BJ (cell line): ENCODE measurements at regions of chr12 and their contacts with region 1.

Region 1: DNA sequence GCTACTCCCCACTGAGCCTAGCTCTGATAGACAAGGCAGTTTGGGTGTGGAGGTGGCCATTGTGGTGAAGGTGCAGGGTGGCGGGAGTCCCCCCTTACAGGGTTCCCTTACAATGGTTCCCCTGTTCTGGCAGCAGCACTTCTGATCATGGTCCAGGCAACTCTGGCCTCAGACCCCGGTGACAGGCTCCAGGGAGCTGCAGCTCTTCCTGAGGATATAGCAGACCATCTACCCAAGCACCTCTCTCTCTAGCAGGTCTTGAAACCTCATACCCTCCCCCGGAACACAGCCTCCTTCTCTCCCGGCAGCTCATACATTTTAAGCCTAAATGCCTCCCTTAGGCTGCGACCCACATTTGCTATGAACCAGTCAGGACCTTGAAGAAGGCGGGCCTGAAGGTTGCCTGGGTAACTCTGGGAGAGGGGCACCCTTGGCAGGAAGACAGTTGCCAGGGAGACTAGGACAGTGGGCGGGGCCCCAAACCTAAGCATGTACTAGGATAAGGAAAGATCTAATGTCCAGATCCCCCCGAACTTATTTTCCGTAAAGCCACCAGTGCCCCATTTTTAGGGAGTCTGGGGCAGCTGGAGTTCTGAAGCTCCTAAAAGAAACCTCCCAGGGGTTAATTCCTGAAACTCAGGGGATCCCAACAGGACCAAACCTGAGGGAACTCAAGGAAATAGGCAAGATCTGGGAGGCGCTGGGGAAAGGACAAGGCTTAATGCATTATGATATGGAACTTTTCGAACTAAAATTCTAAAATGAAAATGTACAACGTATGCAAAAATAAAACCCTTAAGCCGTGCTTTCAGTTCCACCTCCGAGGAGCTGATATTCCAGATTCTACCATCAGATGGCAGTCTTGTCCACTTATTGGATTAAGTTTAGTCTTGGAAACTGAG is 4.5 kb upstream of the GDF11 start:
- DNase-seq: no peak
- H3K4me3 ChIP-seq: peak overlapping the region; percentile 58
- H3K27me3 ChIP-seq: no peaks in the 10 kb centered on the region
- CTCF ChIP-seq: peak; percentile 67

Region 2: DNA sequence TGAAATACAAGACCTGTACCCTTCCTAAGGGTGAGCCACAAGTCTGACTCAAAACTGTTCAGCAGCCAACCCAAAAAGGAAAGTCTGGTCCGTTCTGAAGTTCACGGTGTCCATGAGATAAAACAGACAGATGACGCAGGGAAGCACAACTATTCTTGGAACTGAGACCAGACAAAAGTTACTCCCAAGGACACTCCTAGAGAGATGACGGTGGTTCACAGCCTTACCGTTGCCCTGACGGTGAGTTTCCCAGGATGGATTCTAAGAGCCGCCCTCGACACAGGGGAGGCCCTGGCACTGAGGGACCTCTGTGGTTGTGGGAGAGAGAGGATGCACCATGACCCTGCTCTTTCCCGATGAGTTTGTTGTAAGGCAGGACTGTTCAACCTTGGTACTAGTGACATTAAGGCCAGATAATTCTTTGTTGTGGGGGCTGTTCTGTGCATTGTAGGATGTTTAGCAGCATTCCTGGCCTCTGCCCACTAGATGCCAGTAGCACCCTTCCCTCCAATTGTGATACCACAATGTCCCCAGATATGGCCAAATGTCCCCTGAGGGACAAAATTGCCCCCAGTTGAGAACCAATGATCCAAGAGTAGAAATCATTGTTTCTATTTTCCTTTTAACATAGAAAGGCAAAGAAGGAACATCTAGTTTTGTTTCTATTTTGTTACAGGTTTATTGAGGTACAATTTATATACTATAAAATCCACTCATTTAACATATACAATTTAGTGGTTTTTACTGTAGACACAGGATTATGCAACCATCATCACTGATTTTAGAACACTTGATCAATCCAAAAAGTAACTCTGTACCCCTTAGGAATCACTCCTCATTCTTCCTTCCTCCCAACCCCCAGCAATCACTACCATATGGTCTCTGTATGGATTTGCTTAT is 78.6 kb before region 1 on chr12:
- CTCF ChIA-PET with region 1: interaction called, 41 read pairs
- POLR2A ChIA-PET with region 1: no interaction called
- DNase-seq: no peak
- H3K4me3 ChIP-seq: no peak overlapping the region
- H3K27me3 ChIP-seq: peaks cover 9% of the 10 kb centered on the region
- CTCF ChIP-seq: peak; percentile 46; the same call in 1 of the 2 replicates

Region 3: DNA sequence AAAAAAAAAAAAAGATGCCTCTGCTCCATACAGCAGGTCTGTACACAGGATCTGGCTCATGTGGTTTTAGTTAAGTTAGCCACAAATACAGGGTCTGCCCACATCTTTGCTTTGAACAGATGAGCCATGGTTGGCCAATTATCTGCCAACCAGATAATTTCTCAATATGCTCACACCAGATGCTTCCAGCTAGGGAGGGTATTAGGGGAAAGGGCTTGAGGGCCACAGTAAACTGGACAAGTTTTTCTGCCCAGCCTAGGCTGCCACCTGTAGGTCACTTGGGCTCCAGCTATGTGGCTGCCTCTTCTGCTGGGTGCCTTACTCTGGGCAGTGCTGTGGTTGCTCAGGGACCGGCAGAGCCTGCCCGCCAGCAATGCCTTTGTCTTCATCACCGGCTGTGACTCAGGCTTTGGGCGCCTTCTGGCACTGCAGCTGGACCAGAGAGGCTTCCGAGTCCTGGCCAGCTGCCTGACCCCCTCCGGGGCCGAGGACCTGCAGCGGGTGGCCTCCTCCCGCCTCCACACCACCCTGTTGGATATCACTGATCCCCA is 17.4 kb before region 1 on chr12:
- CTCF ChIA-PET with region 1: interaction called, 42 read pairs
- POLR2A ChIA-PET with region 1: no interaction called
- DNase-seq: no peak
- H3K4me3 ChIP-seq: no peak overlapping the region
- H3K27me3 ChIP-seq: no peaks in the 10 kb centered on the region
- CTCF ChIP-seq: peak; percentile 69

Region 4: DNA sequence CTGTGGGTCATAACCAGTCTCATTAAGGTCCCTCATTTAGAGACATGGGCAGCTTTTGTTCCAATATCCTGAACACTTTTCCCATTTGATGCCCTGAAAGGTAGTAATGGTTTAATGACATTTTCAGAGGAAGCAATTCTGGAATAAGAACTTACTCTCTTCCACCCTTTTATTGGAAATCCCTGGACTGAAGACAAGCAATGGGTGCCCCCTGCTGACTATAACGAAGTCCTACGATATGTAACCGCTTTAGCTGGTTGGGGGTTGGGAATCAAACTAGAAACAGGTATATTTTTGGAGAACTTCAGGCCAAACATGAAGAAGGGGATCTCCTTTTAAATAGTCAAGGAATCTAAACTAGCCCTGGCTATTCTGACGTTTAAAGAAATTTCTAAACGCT is 58.7 kb after region 1 on chr12:
- CTCF ChIA-PET with region 1: interaction called, 64 read pairs
- POLR2A ChIA-PET with region 1: no interaction called
- DNase-seq: no peak
- H3K4me3 ChIP-seq: no peak overlapping the region
- H3K27me3 ChIP-seq: no peaks in the 10 kb centered on the region
- CTCF ChIP-seq: peak; percentile 69

Region 5: DNA sequence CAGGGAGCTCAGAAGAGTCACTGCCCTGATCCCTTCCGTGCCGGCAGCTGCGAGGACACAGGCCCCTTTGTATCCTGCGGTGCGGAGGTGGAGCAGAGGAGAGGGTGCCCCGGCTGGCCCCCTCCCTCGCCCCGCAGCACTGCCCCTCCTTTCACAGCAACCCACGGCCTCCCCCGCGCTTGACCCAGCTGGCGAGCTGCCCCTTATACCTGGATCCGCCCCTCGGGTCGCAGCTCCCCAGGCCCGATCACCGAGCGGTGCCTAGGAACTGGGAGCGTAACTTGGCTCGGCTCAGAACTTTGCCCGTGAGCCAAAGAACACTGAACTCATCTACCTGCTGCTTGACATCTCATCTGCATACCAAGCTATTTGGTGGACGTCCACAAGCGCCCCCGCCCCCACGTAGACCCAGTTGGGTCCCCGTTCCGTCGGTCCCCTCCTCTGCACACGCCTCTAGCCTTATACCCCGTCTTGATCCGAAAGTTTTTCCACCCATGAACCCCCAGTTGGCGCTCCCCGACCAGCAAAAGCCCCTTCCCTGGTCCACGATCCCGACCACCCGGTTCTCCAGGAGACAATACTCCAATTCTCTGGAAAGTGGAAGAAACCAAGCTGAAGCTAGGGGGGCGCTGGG is 91.7 kb after region 1 on chr12:
- CTCF ChIA-PET with region 1: interaction called, 22 read pairs
- POLR2A ChIA-PET with region 1: no interaction called
- DNase-seq: no peak
- H3K4me3 ChIP-seq: peak overlapping the region; percentile 84
- H3K27me3 ChIP-seq: no peaks in the 10 kb centered on the region
- CTCF ChIP-seq: no peak

Region 6: GRCh38 chr12:55940065-55940732 is 201.8 kb after region 1 on chr12:
- CTCF ChIA-PET with region 1: interaction called, 86 read pairs
- POLR2A ChIA-PET with region 1: no interaction called
- DNase-seq: no peak
- H3K4me3 ChIP-seq: no peak overlapping the region
- H3K27me3 ChIP-seq: no peaks in the 10 kb centered on the region
- CTCF ChIP-seq: peak; percentile 95

Region 7: DNA sequence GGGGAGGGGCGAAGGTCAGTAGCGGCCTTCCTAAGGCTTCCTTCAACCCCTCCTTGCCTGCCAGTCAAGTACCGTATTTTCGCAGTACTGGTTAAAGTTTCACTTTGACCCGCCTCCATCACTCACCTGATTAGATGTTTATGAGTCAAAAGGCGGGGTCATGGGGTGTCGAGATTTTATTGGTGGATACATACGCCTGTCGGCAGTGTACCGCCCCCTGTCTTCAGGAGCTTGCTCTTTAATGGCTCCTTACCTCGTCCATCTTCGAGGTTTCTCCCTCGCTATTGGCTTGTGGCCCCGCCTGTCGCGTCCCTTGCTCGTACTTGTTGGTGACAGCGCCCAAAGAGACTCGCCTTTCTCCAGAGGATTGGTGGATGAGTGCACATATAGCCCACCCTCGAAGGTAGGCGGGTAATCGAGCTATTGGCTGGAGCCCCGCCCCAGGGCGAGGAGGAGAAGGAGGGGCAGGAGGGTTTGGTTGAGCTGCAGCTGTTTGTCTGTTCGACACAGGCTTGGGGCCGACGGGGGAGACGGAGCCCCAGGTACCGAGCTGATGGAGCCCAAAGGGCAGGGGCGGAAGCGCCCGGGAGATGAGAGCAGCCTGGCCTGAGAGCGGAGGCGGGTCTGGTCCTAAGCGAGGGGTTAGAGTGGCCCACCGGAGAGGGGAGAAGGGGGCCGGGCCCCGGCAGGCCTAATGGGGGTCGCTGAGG is 235.4 kb after region 1 on chr12 and contains the start of gene RAB5B:
- CTCF ChIA-PET with region 1: interaction called, 11 read pairs
- POLR2A ChIA-PET with region 1: no interaction called
- DNase-seq: peak; percentile 100
- H3K4me3 ChIP-seq: peak within 1 kb of the TSS; percentile 98
- H3K27me3 ChIP-seq: no peaks in the 10 kb centered on the region
- CTCF ChIP-seq: peak; percentile 24; the same call in 1 of the 2 replicates
- polyA plus RNA-seq, gene RAB5B: 117 and 130 TPM in 2 replicates